SK-N-SH (cell line): ENCODE measurements at regions of chr19 and their contacts with region 1.

Region 1: GRCh38 chr19:47243776-47244547 is 12.4 kb upstream of the CCDC9 start:
- DNase-seq: peak; percentile 91
- H3K4me3 ChIP-seq: peak overlapping the region; percentile 37 to 57
- H3K27ac ChIP-seq: peak overlapping the region; percentile 68 to 84
- H3K4me1 ChIP-seq: peaks cover 12 to 36% of the 10 kb centered on the region in 2 experiments; a peak in 3 of 4 replicates
- H3K27me3 ChIP-seq: no peaks in the 10 kb centered on the region
- CTCF ChIP-seq: peak; percentile 97
- EP300 ChIP-seq: peak in 1 of 2 experiments; percentile 68; a peak in 1 of 4 replicates
- RAD21 ChIP-seq: peak; percentile 94

Region 2: DNA sequence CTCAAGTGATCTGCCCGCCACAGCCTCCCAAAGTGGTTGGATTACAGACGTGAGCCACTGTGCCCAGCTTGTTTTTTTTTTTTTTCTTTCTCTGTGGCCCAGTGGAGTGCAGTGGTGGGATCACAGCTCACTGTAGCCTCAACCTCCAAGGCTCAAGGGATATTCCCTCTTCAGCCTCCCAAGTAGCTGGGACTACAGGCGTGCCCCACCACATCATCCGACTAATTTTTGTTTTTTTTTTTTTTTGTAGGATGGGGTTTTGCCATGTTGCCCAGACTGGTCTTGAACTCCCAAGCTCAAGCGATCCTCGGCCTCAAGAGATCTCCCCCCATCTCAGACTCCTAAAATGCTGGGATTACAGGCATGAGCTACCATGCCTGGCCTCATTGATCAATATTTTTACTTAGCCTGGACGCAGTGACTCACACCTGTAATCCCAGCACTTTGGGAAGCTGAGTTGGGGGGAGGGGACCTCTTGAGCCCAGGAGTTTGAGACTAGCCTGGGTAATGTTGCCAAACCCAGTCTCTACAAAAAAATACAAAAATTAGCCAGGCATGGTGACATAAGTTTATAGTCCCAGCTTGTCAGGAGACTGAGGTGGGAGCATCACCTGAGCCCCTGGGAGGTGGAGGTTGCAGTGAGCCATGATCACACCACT is 111.6 kb before region 1 on chr19:
- CTCF ChIA-PET with region 1: interaction called, 11 read pairs
- POLR2A ChIA-PET with region 1: interaction called, 5 read pairs
- DNase-seq: no peak
- H3K4me3 ChIP-seq: peak overlapping the region in 1 of 2 experiments; percentile 80; a peak in 2 of 4 replicates
- H3K27ac ChIP-seq: no peak overlapping the region
- H3K4me1 ChIP-seq: peaks cover 2 to 18% of the 10 kb centered on the region in 2 experiments; a peak in 3 of 4 replicates
- H3K27me3 ChIP-seq: no peaks in the 10 kb centered on the region
- CTCF ChIP-seq: no peak
- EP300 ChIP-seq: no peak
- RAD21 ChIP-seq: no peak

Region 3: DNA sequence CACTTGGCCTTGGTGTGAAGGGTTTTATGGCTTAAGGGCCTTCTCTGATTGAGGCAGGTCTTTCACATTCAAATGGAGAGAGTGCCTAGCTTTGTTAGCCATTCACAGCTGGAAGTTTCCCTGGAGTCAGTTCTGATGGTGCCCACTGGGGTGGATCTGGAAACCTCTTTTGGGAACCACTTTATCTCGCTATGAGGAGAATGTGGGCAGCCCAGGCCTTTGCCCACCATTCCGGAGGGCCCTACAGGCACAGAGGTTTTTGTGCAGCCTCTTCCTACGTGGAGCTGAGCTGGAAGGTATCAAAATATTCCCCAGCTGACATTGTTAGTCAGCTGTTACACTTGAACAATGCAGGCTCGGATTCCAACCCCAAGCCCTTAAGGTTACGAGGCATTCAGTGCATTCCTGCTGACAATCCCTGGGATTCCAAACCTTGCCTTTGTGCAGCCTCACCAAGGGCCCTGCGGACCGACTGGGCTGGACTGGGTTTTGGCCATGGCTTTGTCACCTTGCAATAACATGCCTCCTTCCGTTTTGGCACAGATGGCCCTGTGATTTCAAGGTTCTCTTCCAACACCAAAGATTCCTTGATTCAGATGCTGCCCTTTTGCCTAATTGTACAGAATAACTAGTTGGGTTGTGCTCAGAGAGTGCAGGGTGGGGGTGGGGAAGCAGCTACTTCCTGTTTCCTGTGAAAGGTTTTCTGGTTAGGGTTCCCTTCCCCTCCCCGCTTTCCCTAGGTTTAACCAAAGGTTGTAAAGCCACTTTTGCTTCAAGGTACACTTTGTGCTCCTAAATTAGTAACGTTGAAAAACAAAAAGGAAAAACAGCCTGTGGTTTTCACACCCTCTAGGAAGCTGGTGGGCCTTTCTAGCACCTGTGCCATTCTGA is 86.3 kb before region 1 on chr19:
- CTCF ChIA-PET with region 1: interaction called, 132 read pairs
- POLR2A ChIA-PET with region 1: no interaction called
- DNase-seq: no peak
- H3K4me3 ChIP-seq: no peak overlapping the region
- H3K27ac ChIP-seq: peak overlapping the region; percentile 51 to 52; a peak in 3 of 4 replicates
- H3K4me1 ChIP-seq: peaks cover 11 to 19% of the 10 kb centered on the region in 2 experiments
- H3K27me3 ChIP-seq: no peaks in the 10 kb centered on the region
- CTCF ChIP-seq: no peak
- EP300 ChIP-seq: no peak
- RAD21 ChIP-seq: no peak

Region 4: GRCh38 chr19:47210689-47211316 is 33.2 kb before region 1 on chr19:
- CTCF ChIA-PET with region 1: interaction called, 520 read pairs
- POLR2A ChIA-PET with region 1: interaction called, 36 read pairs
- DNase-seq: peak; percentile 74
- H3K4me3 ChIP-seq: no peak overlapping the region
- H3K27ac ChIP-seq: peak overlapping the region; percentile 29 to 76; a peak in 3 of 4 replicates
- H3K4me1 ChIP-seq: peaks cover 3 to 8% of the 10 kb centered on the region in 2 experiments; a peak in 1 of 4 replicates
- H3K27me3 ChIP-seq: no peaks in the 10 kb centered on the region
- CTCF ChIP-seq: peak; percentile 85
- EP300 ChIP-seq: no peak
- RAD21 ChIP-seq: peak; percentile 83

Region 5: GRCh38 chr19:47256688-47257443 is 12.9 kb after region 1 on chr19:
- CTCF ChIA-PET with region 1: interaction called, 51 read pairs
- POLR2A ChIA-PET with region 1: interaction called, 18 read pairs
- DNase-seq: peak; percentile 97
- H3K4me3 ChIP-seq: peak overlapping the region; percentile 69 to 72
- H3K27ac ChIP-seq: peak overlapping the region; percentile 94
- H3K4me1 ChIP-seq: peaks cover 9 to 13% of the 10 kb centered on the region in 2 experiments; a peak in 2 of 4 replicates
- H3K27me3 ChIP-seq: no peaks in the 10 kb centered on the region
- CTCF ChIP-seq: no peak
- EP300 ChIP-seq: no peak
- RAD21 ChIP-seq: no peak

Region 6: GRCh38 chr19:47315125-47315821 is 71.3 kb after region 1 on chr19:
- CTCF ChIA-PET with region 1: no interaction called
- POLR2A ChIA-PET with region 1: no interaction called
- DNase-seq: no peak
- H3K4me3 ChIP-seq: no peak overlapping the region
- H3K27ac ChIP-seq: no peak overlapping the region
- H3K4me1 ChIP-seq: peaks cover 0 to 4% of the 10 kb centered on the region in 2 experiments; a peak in 2 of 4 replicates
- H3K27me3 ChIP-seq: peaks cover 12% of the 10 kb centered on the region
- CTCF ChIP-seq: no peak
- EP300 ChIP-seq: no peak
- RAD21 ChIP-seq: no peak